T-cell (primary cell): ENCODE measurements at regions of chr22 and their contacts with region 1.

Region 1: DNA sequence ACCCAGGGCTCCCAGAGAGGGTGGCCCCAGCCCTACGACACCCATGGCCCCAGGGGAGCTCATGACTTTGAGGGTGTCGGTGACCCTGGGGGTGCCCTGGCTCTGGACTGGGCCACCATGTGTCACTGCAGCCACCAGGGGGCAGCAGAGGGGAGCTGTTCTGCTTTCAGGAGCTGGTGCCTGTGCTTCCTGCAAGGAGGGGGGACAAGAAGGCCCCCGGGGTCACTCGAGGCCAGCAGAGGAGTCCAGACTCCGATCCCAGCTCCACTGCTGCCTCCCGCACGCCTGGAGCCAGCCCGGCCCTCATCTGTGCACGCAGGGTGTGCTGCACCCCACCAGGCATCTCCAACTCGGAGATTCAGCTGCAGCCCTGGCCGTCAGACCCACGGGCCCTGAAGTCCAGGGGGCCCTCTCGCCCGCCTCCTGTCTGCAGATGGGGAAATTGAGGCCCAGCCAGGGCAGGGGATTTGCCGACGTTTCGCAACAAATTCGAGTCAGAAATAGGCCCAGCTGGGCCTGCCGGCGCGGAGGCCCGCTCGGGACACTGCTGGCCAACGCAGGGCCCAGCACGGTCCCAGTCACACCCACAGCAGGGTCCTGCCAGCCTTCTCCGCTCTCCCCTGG is 29.5 kb upstream of the WNT7B start:
- DNase-seq: peak; percentile 60 to 92 (median 83)
- ATAC-seq: peak; percentile 82 to 96 (median 87)
- H3K4me3 ChIP-seq: no peak overlapping the region
- H3K4me3 Mint-ChIP-seq: no peak overlapping the region
- H3K27ac ChIP-seq: no peak overlapping the region
- H3K27ac Mint-ChIP-seq: no peak overlapping the region
- H3K4me1 ChIP-seq: peaks cover 0 to 25% of the 10 kb centered on the region in 2 experiments
- H3K4me1 Mint-ChIP-seq: peaks cover 9 to 13% (median 10%) of the 10 kb centered on the region in 3 donors
- H3K27me3 ChIP-seq: peaks cover 0 to 33% of the 10 kb centered on the region in 2 experiments
- H3K27me3 Mint-ChIP-seq: peaks cover 0 to 4% of the 10 kb centered on the region in 2 donors

Region 2: GRCh38 chr22:46035742-46036557 is 29.5 kb after region 1 on chr22:
- CTCF ChIA-PET with region 1: interaction called, 4 to 78 read pairs
- POLR2A ChIA-PET with region 1: interaction called in 1 of 2 experiments, 4 read pairs
- DNase-seq: peak; percentile 98 to 100 (median 100)
- ATAC-seq: peak; percentile 86 to 93 (median 91)
- H3K4me3 ChIP-seq: peak overlapping the region; percentile 77 to 79
- H3K4me3 Mint-ChIP-seq: peak overlapping the region; percentile 79 to 84 (median 81)
- H3K27ac ChIP-seq: peak overlapping the region; percentile 97
- H3K27ac Mint-ChIP-seq: peak overlapping the region; percentile 91 to 93
- H3K4me1 ChIP-seq: peaks cover 15 to 17% of the 10 kb centered on the region in 2 experiments
- H3K4me1 Mint-ChIP-seq: peaks cover 11 to 20% (median 20%) of the 10 kb centered on the region in 3 donors
- H3K27me3 ChIP-seq: no peaks in the 10 kb centered on the region
- H3K27me3 Mint-ChIP-seq: no peaks in the 10 kb centered on the region

Region 3: GRCh38 chr22:46116491-46116958 is 110.0 kb after region 1 on chr22:
- CTCF ChIA-PET with region 1: interaction called, 11 to 31 read pairs
- POLR2A ChIA-PET with region 1: no interaction called
- DNase-seq: peak; percentile 59 to 88 (median 80)
- ATAC-seq: peak; percentile 88 to 97 (median 89)
- H3K4me3 ChIP-seq: no peak overlapping the region
- H3K4me3 Mint-ChIP-seq: no peak overlapping the region
- H3K27ac ChIP-seq: no peak overlapping the region
- H3K27ac Mint-ChIP-seq: no peak overlapping the region
- H3K4me1 ChIP-seq: peaks cover 0 to 10% of the 10 kb centered on the region in 2 experiments
- H3K4me1 Mint-ChIP-seq: peaks cover 0 to 3% (median 0%) of the 10 kb centered on the region in 3 donors
- H3K27me3 ChIP-seq: peaks cover 0 to 5% of the 10 kb centered on the region in 2 experiments
- H3K27me3 Mint-ChIP-seq: no peaks in the 10 kb centered on the region